CD8-positive, alpha-beta memory T cell (primary cell): ENCODE measurements at regions of chr12 and their contacts with region 1.

Region 1: GRCh38 chr12:55996715-55997534 is at the start of gene SUOX:
- DNase-seq: no peak
- H3K4me3 ChIP-seq: peak within 1 kb of the TSS; percentile 17
- H3K4me3 Mint-ChIP-seq: peak within 1 kb of the TSS in 3 of 7 donors; percentile 37 to 69 (median 44)
- H3K27ac ChIP-seq: peak within 1 kb of the TSS; percentile 68
- H3K27ac Mint-ChIP-seq: peak within 1 kb of the TSS in 5 of 8 donors; percentile 29 to 82 (median 58)
- H3K4me1 ChIP-seq: peaks cover 5% of the 10 kb centered on the region
- H3K4me1 Mint-ChIP-seq: peaks cover 11 to 14% (median 13%) of the 10 kb centered on the region in 3 donors
- H3K27me3 ChIP-seq: no peaks in the 10 kb centered on the region
- H3K27me3 Mint-ChIP-seq: peaks cover 0 to 5% of the 10 kb centered on the region in 2 donors
- total RNA-seq, gene SUOX: 2.3 to 2.5 TPM

Region 2: GRCh38 chr12:55619354-55620138 is 377.4 kb before region 1 on chr12:
- CTCF ChIA-PET with region 1: no interaction called
- POLR2A ChIA-PET with region 1: no interaction called
- DNase-seq: peak in 4 of 5 donors; percentile 17 to 70 (median 52)
- H3K4me3 ChIP-seq: no peak overlapping the region
- H3K4me3 Mint-ChIP-seq: no peak overlapping the region
- H3K27ac ChIP-seq: no peak overlapping the region
- H3K27ac Mint-ChIP-seq: no peak overlapping the region
- H3K4me1 ChIP-seq: no peaks in the 10 kb centered on the region
- H3K4me1 Mint-ChIP-seq: peaks cover 2 to 5% (median 5%) of the 10 kb centered on the region in 3 donors
- H3K27me3 ChIP-seq: no peaks in the 10 kb centered on the region
- H3K27me3 Mint-ChIP-seq: peaks cover 16 to 40% of the 10 kb centered on the region in 2 donors

Region 3: DNA sequence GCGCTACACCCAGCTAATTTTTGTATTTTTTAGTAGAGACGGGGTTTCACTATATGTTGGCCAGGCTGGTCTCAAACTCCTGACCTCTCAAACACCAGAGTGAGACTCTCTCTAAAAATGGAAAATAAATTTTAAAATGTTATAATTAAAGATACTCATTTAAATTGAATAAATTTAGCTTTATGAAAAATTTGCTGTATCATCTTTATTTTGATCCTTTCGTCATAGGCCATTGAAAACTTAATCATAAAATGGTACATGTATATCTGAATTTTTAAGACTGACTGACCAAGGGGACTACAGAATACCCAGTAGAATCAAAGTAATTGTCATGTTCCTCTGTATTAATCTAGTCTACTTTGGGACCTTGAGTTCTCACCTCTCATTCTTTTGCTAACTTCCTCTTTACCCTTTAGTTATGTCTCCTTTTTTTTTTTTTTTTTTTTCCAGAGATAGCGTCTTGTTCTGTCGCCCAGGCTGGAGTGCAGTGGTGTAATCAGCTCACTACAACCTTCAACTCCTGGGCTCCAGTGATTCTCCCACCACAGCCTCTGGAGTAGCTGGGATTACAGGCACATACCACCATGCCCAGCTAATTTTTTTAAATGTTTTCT is 13.6 kb before region 1 on chr12:
- CTCF ChIA-PET with region 1: interaction called, 19 read pairs
- POLR2A ChIA-PET with region 1: no interaction called
- DNase-seq: no peak
- H3K4me3 ChIP-seq: no peak overlapping the region
- H3K4me3 Mint-ChIP-seq: no peak overlapping the region
- H3K27ac ChIP-seq: no peak overlapping the region
- H3K27ac Mint-ChIP-seq: no peak overlapping the region
- H3K4me1 ChIP-seq: no peaks in the 10 kb centered on the region
- H3K4me1 Mint-ChIP-seq: peaks cover 10 to 28% (median 13%) of the 10 kb centered on the region in 3 donors
- H3K27me3 ChIP-seq: no peaks in the 10 kb centered on the region
- H3K27me3 Mint-ChIP-seq: no peaks in the 10 kb centered on the region

Region 4: GRCh38 chr12:56014206-56014605 is 17.3 kb after region 1 on chr12:
- CTCF ChIA-PET with region 1: interaction called, 19 read pairs
- POLR2A ChIA-PET with region 1: no interaction called
- DNase-seq: no peak
- H3K4me3 ChIP-seq: no peak overlapping the region
- H3K4me3 Mint-ChIP-seq: no peak overlapping the region
- H3K27ac ChIP-seq: no peak overlapping the region
- H3K27ac Mint-ChIP-seq: no peak overlapping the region
- H3K4me1 ChIP-seq: no peaks in the 10 kb centered on the region
- H3K4me1 Mint-ChIP-seq: peaks cover 0 to under 1% (median 0%) of the 10 kb centered on the region in 3 donors
- H3K27me3 ChIP-seq: no peaks in the 10 kb centered on the region
- H3K27me3 Mint-ChIP-seq: peaks cover 0 to 2% of the 10 kb centered on the region in 2 donors

Region 5: DNA sequence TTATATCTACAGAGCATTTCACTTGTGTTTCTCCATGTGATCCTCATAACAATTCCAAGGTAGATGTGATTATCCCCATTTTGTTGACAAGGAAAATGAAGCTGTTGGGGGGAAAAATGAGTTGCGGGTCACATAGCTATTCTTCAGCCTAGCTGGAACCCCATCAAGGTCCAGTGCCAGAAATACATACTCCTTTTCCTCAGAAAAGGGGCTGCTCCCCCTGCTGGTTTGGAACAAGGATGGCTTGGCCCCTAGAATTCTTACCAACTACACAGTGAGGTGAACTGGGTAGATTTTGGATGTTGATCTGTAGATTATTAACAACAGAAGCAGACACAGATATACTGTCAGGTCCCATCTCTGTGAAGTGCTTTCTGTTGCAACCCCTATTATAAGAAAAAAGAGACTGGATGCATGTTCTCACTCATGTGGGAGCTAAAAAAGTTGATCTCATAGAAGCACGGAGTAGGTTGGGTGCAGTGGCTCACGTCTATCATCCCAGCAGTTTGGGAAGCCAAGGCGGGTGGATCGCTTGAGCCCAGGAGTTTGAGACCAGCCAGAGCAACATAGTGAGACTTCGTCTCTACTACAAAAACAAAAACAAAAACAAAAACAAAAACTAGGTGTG is 32.9 kb after region 1 on chr12:
- CTCF ChIA-PET with region 1: interaction called, 22 read pairs
- POLR2A ChIA-PET with region 1: no interaction called
- DNase-seq: peak in 2 of 5 donors; percentile 26 to 36
- H3K4me3 ChIP-seq: no peak overlapping the region
- H3K4me3 Mint-ChIP-seq: no peak overlapping the region
- H3K27ac ChIP-seq: no peak overlapping the region
- H3K27ac Mint-ChIP-seq: peak overlapping the region in 1 of 8 donors; percentile 45
- H3K4me1 ChIP-seq: no peaks in the 10 kb centered on the region
- H3K4me1 Mint-ChIP-seq: peaks cover 3 to 23% (median 7%) of the 10 kb centered on the region in 3 donors
- H3K27me3 ChIP-seq: no peaks in the 10 kb centered on the region
- H3K27me3 Mint-ChIP-seq: peaks cover 0 to 1% of the 10 kb centered on the region in 2 donors